ENCODE measurements at regions of chr11 and their contacts with region 1.

Region 1: DNA sequence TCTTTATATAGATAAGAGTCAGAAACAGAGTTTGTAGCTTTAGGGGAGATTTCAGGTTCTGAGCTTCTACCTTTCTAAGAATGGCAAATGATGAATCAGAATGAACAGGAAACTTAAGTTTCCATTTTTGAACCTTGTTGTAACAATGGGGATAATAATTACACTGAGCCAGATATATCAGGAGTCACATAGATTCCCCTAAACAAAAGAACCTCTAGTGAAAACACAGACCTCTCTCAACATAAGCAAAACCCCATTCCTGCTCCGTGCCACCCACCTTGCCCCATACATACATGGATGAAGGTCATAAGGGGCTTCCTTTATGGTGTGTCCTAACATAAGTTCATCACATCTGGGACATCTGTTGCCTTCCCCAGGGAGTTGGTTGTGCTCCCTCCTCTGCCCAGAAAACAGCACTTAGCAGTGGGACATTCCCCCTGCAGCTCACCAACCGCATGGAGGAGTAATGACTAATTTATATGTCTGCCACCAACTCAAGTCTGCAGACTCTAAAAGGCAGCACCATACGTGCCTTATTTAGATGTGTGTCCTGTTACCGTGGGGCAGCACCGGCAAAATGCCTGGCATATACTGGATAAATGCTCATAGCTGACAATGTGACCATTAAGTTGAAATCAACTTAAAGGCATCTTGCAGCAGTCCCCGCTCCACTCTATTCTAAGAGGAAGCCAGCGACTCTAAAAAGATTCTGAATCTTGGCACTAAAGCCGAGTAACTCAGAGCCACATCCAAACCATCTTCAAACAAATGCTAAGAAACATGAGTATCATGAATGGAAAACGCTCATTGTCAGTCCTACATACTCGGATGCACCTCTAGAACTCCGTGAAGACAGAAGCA is 8.0 kb downstream of the JAML start:
- DNase-seq: no peak
- H3K4me3 Mint-ChIP-seq: peak overlapping the region; percentile 82
- H3K27ac Mint-ChIP-seq: peak overlapping the region; percentile 97
- H3K4me1 Mint-ChIP-seq: peaks cover 93% of the 10 kb centered on the region
- H3K27me3 Mint-ChIP-seq: no peaks in the 10 kb centered on the region

Region 2: DNA sequence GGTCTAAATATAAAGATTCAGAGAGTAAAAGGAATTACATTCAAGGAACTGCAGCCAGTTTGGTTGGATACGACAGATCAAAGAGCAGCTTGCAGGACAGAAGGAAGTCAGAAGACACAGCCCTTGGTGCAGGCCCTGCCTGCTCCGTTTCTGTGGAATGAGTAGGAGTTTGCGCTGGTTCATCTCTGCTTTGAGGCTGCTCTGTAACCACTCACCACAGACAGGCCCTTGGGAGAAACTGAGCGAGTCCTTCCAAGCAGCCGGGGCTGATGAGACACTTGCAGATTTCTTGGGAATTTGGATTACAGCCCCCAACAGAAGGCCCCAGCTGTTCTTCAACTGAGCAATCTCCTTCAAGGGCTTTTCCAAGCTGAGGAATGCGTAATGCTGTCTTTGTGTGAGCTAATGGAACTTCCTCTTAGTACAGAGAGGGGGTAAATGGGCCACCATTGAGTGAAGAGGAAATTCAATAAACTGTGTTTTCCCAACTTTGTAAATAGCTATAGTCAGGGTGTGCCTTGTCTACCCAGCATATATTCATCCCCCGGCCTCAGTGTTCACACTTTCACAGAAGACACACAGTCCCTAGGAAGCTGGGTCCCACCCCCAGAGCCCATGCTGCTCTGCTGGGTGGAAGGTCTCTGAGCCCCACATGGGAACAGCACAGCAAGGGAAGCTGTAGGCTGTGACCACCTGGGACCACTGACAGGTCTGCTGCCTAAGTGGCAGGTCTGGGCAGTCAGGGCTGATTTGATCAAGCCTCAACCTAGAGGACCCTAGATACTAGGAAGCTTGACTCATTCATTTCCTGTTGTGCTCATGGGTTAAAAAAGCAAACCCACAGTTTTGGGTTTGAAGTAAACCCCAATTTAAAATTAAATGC is 214.1 kb before region 1 on chr11:
- intact Hi-C with region 1: loop called (anchors 2 kb)
- DNase-seq: peak; percentile 61
- H3K4me3 Mint-ChIP-seq: peak overlapping the region; percentile 54
- H3K27ac Mint-ChIP-seq: peak overlapping the region; percentile 99
- H3K4me1 Mint-ChIP-seq: peaks cover 85% of the 10 kb centered on the region
- H3K27me3 Mint-ChIP-seq: no peaks in the 10 kb centered on the region

Region 3: GRCh38 chr11:118206391-118207031 is 10.3 kb before region 1 on chr11:
- intact Hi-C with region 1: loop called (anchors 1 kb)
- DNase-seq: no peak
- H3K4me3 Mint-ChIP-seq: peak overlapping the region; percentile 71
- H3K27ac Mint-ChIP-seq: no peak overlapping the region
- H3K4me1 Mint-ChIP-seq: peaks cover 53% of the 10 kb centered on the region
- H3K27me3 Mint-ChIP-seq: no peaks in the 10 kb centered on the region

Region 4: DNA sequence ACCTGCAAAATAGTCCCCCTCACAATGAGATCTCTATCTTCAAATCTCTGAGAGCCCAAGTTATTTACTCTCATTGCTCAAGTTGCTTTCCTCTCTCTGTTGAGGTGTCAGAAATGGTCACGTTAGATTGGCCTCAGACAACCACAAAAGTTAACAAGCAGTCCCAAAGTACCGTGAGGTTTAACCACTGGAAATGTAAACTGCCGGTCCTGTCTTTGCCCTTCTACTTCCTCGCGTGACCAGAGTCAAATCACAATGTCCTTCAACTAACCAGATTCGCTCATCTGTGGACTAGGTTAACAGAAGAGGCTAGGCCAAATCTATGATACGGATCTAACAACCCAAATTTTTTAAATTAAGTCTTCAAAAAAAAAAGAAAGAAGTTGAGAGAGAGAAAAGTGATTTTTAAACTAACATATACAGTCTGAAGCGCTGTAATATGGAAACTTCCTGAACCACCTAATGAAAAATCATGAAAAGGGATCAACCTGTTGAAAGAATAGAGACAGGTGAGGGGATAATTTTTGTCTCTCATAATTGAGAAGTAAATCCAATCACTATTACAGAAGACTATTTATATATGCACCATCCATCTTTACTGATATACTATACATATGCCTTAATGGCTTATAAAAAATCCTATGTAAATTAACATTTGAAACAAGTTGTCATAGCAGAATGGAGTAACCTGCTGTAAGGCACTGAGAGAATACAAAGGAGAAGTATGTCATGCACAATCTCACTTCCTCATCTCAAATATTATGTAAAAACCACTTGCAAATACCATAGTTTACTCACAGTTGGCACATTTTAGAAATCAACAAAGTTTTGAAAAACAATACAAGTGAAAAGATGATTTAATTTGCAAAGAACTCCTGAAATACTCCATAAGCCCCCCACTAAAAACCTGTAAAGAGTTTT is 11.3 kb after region 1 on chr11:
- intact Hi-C with region 1: loop called (anchors 1 kb)
- DNase-seq: peak; percentile 47
- H3K4me3 Mint-ChIP-seq: peak overlapping the region; percentile 67
- H3K27ac Mint-ChIP-seq: peak overlapping the region; percentile 95
- H3K4me1 Mint-ChIP-seq: peaks cover 52% of the 10 kb centered on the region
- H3K27me3 Mint-ChIP-seq: no peaks in the 10 kb centered on the region

Region 5: GRCh38 chr11:118247047-118247446 is 30.2 kb after region 1 on chr11:
- intact Hi-C with region 1: loop called (anchors 1 kb)
- DNase-seq: no peak
- H3K4me3 Mint-ChIP-seq: peak overlapping the region; percentile 56
- H3K27ac Mint-ChIP-seq: peak overlapping the region; percentile 95
- H3K4me1 Mint-ChIP-seq: peaks cover 66% of the 10 kb centered on the region
- H3K27me3 Mint-ChIP-seq: no peaks in the 10 kb centered on the region

Region 6: GRCh38 chr11:118304568-118305248 is 87.9 kb after region 1 on chr11 and contains the start of gene CD3E:
- intact Hi-C with region 1: loop called (anchors 5 kb)
- DNase-seq: peak; percentile 64
- H3K4me3 Mint-ChIP-seq: peak within 1 kb of the TSS; percentile 89
- H3K27ac Mint-ChIP-seq: peak within 1 kb of the TSS; percentile 100
- H3K4me1 Mint-ChIP-seq: peaks cover 47% of the 10 kb centered on the region
- H3K27me3 Mint-ChIP-seq: no peaks in the 10 kb centered on the region
- total RNA-seq, gene CD3E: 518 and 529 TPM in 2 replicates

Measured in activated T-helper 2 cell treated with anti-CD3 and anti-CD28 coated beads, Interferon-gamma antibody, Interleukin-2, Interleukin-4, amounts not matched to agents 10 μg/mL and 5 μg/mL and 100 μg/mL, durations not matched to agents 14 hours and 24 hours and 36 hours (primary cell).